ENCODE measurements at regions of chr1 and their contacts with region 1.

Region 1: GRCh38 chr1:201481761-201482493 is 12.9 kb upstream of the PHLDA3 start:
- DNase-seq: peak; percentile 88
- ATAC-seq: peak; percentile 83
- H3K4me3 Mint-ChIP-seq: peak overlapping the region; percentile 74
- H3K27ac Mint-ChIP-seq: no peak overlapping the region
- H3K4me1 Mint-ChIP-seq: peaks cover 35% of the 10 kb centered on the region
- H3K27me3 Mint-ChIP-seq: peaks cover 16% of the 10 kb centered on the region

Region 2: DNA sequence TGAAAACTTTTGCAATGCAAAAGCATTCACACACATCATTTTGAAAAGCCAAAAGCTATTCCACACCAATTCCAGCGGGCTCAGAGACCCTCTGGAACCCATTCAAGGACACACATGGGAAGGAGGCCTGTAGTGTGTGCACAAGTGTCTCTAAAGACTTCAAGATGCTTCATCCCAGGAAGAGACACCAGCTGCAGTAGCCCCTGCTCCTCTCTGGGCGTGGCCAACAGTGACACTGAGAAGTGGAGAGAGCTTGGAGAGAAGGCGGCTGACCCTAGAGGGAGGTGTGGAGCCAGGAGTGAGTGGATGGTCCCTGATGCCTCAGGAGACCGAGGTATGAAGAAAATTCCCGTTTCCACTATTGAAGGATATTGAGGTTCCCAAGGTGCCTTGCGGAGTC is 45.5 kb before region 1 on chr1:
- CTCF ChIA-PET with region 1: interaction called, 26 read pairs
- POLR2A ChIA-PET with region 1: no interaction called
- DNase-seq: no peak
- ATAC-seq: no peak
- H3K4me3 Mint-ChIP-seq: no peak overlapping the region
- H3K27ac Mint-ChIP-seq: no peak overlapping the region
- H3K4me1 Mint-ChIP-seq: peaks cover 5% of the 10 kb centered on the region
- H3K27me3 Mint-ChIP-seq: peaks cover 23% of the 10 kb centered on the region

Region 3: GRCh38 chr1:201447911-201448871 is 33.7 kb before region 1 on chr1:
- CTCF ChIA-PET with region 1: interaction called, 147 read pairs
- POLR2A ChIA-PET with region 1: interaction called, 5 read pairs
- DNase-seq: peak; percentile 82
- ATAC-seq: peak; percentile 98
- H3K4me3 Mint-ChIP-seq: no peak overlapping the region
- H3K27ac Mint-ChIP-seq: no peak overlapping the region
- H3K4me1 Mint-ChIP-seq: peaks cover 19% of the 10 kb centered on the region
- H3K27me3 Mint-ChIP-seq: peaks cover 11% of the 10 kb centered on the region

Region 4: GRCh38 chr1:201468844-201469511 is 12.9 kb before region 1 on chr1 and contains the start of gene PHLDA3:
- CTCF ChIA-PET with region 1: interaction called, 40 read pairs
- POLR2A ChIA-PET with region 1: interaction called, 8 read pairs
- DNase-seq: peak; percentile 72
- ATAC-seq: peak; percentile 86
- H3K4me3 Mint-ChIP-seq: peak within 1 kb of the TSS; percentile 84
- H3K27ac Mint-ChIP-seq: peak within 1 kb of the TSS; percentile 81
- H3K4me1 Mint-ChIP-seq: peaks cover 20% of the 10 kb centered on the region
- H3K27me3 Mint-ChIP-seq: peaks cover 35% of the 10 kb centered on the region
- total RNA-seq, gene PHLDA3: 17.3 to 18.7 TPM

Region 5: GRCh38 chr1:201495471-201496295 is 13.8 kb after region 1 on chr1:
- CTCF ChIA-PET with region 1: interaction called, 82 read pairs
- POLR2A ChIA-PET with region 1: interaction called, 5 read pairs
- DNase-seq: no peak
- ATAC-seq: no peak
- H3K4me3 Mint-ChIP-seq: no peak overlapping the region
- H3K27ac Mint-ChIP-seq: no peak overlapping the region
- H3K4me1 Mint-ChIP-seq: peaks cover 8% of the 10 kb centered on the region
- H3K27me3 Mint-ChIP-seq: no peaks in the 10 kb centered on the region

Region 6: GRCh38 chr1:201506556-201507359 is 24.8 kb after region 1 on chr1 and contains the start of gene CSRP1:
- CTCF ChIA-PET with region 1: interaction called, 373 read pairs
- POLR2A ChIA-PET with region 1: interaction called, 17 read pairs
- DNase-seq: peak; percentile 89
- ATAC-seq: peak; percentile 96
- H3K4me3 Mint-ChIP-seq: peak within 1 kb of the TSS; percentile 90
- H3K27ac Mint-ChIP-seq: peak within 1 kb of the TSS; percentile 93
- H3K4me1 Mint-ChIP-seq: peaks cover 59% of the 10 kb centered on the region
- H3K27me3 Mint-ChIP-seq: no peaks in the 10 kb centered on the region
- total RNA-seq, gene CSRP1: 78.7 to 80.9 TPM

Measured in activated CD8-positive, alpha-beta T cell treated with anti-CD3 and anti-CD28 coated beads, Interleukin-2, amount 10 ng/mL, durations not matched to agents 7 days and 5 days (primary cell).